GM23248 (cell line): ENCODE measurements at regions of chr4 and their contacts with region 1.

Region 1: DNA sequence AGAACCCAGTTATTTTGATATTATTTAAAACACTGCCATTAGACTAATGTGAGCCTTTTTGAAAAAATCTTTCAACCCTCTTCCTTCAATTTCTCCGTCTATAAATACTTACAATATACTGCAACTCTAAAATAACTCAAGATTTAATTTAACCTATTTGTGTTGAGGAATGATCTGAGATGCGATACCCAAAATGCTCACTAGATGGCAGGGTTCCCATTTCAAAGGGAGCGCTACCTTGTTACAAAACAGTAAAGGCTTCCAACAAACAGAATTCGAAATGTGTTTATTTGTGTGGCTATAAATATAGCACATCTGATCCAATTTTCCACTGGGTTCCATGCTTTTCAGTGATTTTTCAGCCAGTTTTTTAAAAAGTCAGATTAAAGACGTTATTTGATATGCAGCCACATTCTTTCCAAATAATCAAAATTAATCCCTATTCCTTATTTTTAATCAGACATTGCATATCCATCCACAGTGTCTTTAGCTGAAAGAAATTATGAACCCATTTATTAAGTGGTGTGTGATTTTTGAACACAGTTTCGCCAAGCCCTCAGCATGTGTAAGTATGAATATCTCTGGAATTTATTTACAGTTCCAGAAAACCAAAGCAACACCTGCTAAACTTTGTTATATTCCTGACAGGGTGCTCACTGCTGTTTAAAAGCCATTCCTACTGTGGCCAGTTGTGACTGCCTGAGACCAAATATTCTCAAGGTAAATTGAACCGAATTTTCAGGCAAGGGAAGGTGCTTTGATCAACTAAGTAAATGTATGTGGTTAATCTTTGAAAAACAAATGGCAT is 668.0 kb upstream of the LCORL start:
- DNase-seq: peak; percentile 65
- H3K4me3 ChIP-seq: no peak overlapping the region
- H3K27ac ChIP-seq: no peak overlapping the region
- H3K4me1 ChIP-seq: no peaks in the 10 kb centered on the region
- H3K27me3 ChIP-seq: no peaks in the 10 kb centered on the region

Region 2: GRCh38 chr4:18166925-18167324 is 522.6 kb before region 1 on chr4:
- in situ Hi-C with region 1: no loop called
- DNase-seq: no peak
- H3K4me3 ChIP-seq: no peak overlapping the region
- H3K27ac ChIP-seq: no peak overlapping the region
- H3K4me1 ChIP-seq: no peaks in the 10 kb centered on the region
- H3K27me3 ChIP-seq: no peaks in the 10 kb centered on the region

Region 3: DNA sequence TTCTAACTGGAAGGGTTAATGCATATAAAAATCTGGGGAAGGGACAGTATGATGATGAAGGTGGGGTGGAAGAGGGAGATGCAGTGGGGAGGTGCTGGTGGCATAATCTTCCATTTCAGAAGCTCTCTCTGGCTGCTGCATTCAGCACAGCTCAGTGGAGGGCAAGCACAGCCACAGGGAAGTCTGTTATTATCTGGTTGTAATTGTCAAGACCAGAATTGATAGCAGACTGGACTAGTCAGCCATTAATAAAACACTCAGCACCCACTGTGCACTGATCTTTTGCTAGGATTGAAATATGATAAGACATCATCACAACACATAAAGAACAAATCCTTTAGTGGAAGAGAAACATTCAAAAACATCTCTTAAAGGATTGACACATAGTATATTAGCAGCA is 253.7 kb before region 1 on chr4:
- in situ Hi-C with region 1: no loop called
- DNase-seq: no peak
- H3K4me3 ChIP-seq: no peak overlapping the region
- H3K27ac ChIP-seq: no peak overlapping the region
- H3K4me1 ChIP-seq: no peaks in the 10 kb centered on the region
- H3K27me3 ChIP-seq: no peaks in the 10 kb centered on the region

Region 4: GRCh38 chr4:20251796-20252655 is 1562.5 kb after region 1 on chr4 and contains the start of gene SLIT2:
- in situ Hi-C with region 1: loop called (anchors 25 kb)
- DNase-seq: peak; percentile 88
- H3K4me3 ChIP-seq: peak within 1 kb of the TSS; percentile 82
- H3K27ac ChIP-seq: peak within 1 kb of the TSS; percentile 44
- H3K4me1 ChIP-seq: peaks cover 34% of the 10 kb centered on the region
- H3K27me3 ChIP-seq: no peaks in the 10 kb centered on the region
- total RNA-seq, gene SLIT2: 23.0 and 24.9 TPM in 2 replicates

Region 5: GRCh38 chr4:20428436-20429160 is 1739.1 kb after region 1 on chr4:
- in situ Hi-C with region 1: loop called (anchors 25 kb)
- DNase-seq: peak; percentile 51
- H3K4me3 ChIP-seq: no peak overlapping the region
- H3K27ac ChIP-seq: no peak overlapping the region
- H3K4me1 ChIP-seq: peaks cover 29% of the 10 kb centered on the region
- H3K27me3 ChIP-seq: no peaks in the 10 kb centered on the region

Region 6: DNA sequence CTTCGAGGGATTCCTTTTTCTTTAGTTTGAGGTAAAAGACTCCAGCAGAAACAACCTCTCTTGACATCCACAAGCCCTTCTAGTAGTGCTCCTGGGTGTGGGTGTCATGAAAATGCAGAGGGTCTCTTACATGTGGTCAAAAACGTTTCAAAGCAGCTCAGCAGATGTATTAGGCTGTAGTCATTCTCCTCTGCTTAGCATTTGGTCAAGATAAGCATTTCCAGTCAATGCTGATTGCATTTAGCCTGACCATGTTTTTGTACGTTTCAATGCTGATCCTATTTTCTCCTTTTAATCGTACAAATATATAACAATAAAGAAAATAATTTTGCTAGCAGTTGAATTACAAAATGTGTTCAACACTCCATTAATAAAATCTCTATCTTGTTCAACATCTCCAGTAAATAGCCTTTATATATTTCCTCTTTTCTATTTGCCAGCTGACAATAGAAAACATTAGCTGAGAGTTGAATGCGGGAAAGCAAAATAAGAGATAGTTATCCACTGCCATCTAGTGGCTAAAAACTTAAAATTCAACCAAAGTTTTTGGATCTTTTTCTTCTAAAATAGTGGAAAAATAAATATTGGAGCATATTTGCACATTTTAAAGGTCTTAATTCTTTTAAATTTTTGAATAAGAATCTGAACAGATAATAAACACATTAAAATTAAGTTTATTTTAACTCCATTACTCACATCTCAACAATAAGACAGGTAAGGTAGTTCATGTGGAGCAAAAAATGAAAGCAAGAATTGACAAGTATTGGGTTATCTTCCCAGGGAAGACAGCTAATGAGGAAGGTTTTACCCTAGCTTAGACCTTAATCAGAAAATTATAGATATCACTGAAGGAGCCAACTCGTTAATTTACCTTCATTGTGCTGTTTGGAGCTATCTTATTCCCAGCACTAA is 1995.6 kb after region 1 on chr4:
- in situ Hi-C with region 1: loop called (anchors 25 kb)
- DNase-seq: peak; percentile 61
- H3K4me3 ChIP-seq: no peak overlapping the region
- H3K27ac ChIP-seq: no peak overlapping the region
- H3K4me1 ChIP-seq: peaks cover 6% of the 10 kb centered on the region
- H3K27me3 ChIP-seq: no peaks in the 10 kb centered on the region